ENCODE measurements at regions of chr3 and their contacts with region 1.

Region 1: DNA sequence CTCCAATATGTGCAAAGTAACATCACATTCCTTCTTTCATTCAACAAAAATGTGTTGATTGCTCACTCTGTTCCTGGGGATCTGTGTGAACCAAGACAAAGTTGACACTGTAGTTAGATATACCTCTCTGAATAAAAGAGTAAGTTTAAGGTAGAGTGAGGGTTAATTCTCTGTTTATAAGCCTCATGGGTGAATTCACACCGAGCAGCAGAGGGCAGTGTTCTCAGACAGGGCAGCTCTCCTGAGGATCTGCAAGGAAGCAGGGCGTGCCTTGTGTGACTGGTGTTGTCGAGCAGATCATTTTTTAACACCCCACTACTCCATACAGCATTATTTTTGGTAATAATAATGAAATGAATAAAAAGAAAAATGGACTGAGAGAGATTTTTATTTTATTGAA is 34.4 kb downstream of the PAQR9 start:
- DNase-seq: peak; percentile 62
- ATAC-seq: peak; percentile 97
- H3K4me3 ChIP-seq: no peak overlapping the region
- H3K27ac ChIP-seq: no peak overlapping the region
- H3K4me1 ChIP-seq: peaks cover 0 to 4% of the 10 kb centered on the region in 2 experiments; a peak in 1 of 4 replicates
- H3K27me3 ChIP-seq: no peaks in the 10 kb centered on the region
- CTCF ChIP-seq: peak; percentile 71 to 83 (median 76)
- POLR2A ChIP-seq: no peak
- RAD21 ChIP-seq: peak; percentile 70

Region 2: GRCh38 chr3:142987080-142987700 is 58.1 kb after region 1 on chr3:
- CTCF ChIA-PET with region 1: interaction called, 3 read pairs
- POLR2A ChIA-PET with region 1: no interaction called
- RAD21 ChIA-PET with region 1: no interaction called
- intact Hi-C with region 1: loop called (anchors 2 kb)
- DNase-seq: no peak
- ATAC-seq: peak; percentile 72
- H3K4me3 ChIP-seq: no peak overlapping the region
- H3K27ac ChIP-seq: no peak overlapping the region
- H3K4me1 ChIP-seq: no peaks in the 10 kb centered on the region
- H3K27me3 ChIP-seq: no peaks in the 10 kb centered on the region
- CTCF ChIP-seq: peak; percentile 44 to 76 (median 76)
- POLR2A ChIP-seq: no peak
- RAD21 ChIP-seq: peak; percentile 76